Activated CD8-positive, alpha-beta memory T cell treated with anti-CD3 and anti-CD28 coated beads, Interleukin-2, amount 10 ng/mL, durations not matched to agents 7 days and 5 days (primary cell): ENCODE measurements at regions of chr3 and their contacts with region 1.

Region 1: GRCh38 chr3:186241910-186242821 is 119.9 kb downstream of the DGKG start:
- DNase-seq: peak; percentile 84
- ATAC-seq: peak; percentile 98
- H3K4me3 Mint-ChIP-seq: no peak overlapping the region
- H3K27ac Mint-ChIP-seq: no peak overlapping the region
- H3K4me1 Mint-ChIP-seq: peaks cover 10% of the 10 kb centered on the region
- H3K27me3 Mint-ChIP-seq: peaks cover 39% of the 10 kb centered on the region

Region 2: GRCh38 chr3:185983495-185984141 is 258.5 kb before region 1 on chr3:
- CTCF ChIA-PET with region 1: interaction called, 25 read pairs
- DNase-seq: peak; percentile 61
- ATAC-seq: peak; percentile 78
- H3K4me3 Mint-ChIP-seq: no peak overlapping the region
- H3K27ac Mint-ChIP-seq: no peak overlapping the region
- H3K4me1 Mint-ChIP-seq: peaks cover 3% of the 10 kb centered on the region
- H3K27me3 Mint-ChIP-seq: peaks cover 34% of the 10 kb centered on the region

Region 3: GRCh38 chr3:186138272-186138981 is 103.7 kb before region 1 on chr3:
- CTCF ChIA-PET with region 1: no interaction called
- DNase-seq: no peak
- ATAC-seq: no peak
- H3K4me3 Mint-ChIP-seq: no peak overlapping the region
- H3K27ac Mint-ChIP-seq: no peak overlapping the region
- H3K4me1 Mint-ChIP-seq: no peaks in the 10 kb centered on the region
- H3K27me3 Mint-ChIP-seq: peaks cover 38% of the 10 kb centered on the region

Region 4: GRCh38 chr3:186298876-186299275 is 56.7 kb after region 1 on chr3:
- CTCF ChIA-PET with region 1: no interaction called
- DNase-seq: no peak
- ATAC-seq: no peak
- H3K4me3 Mint-ChIP-seq: no peak overlapping the region
- H3K27ac Mint-ChIP-seq: no peak overlapping the region
- H3K4me1 Mint-ChIP-seq: no peaks in the 10 kb centered on the region
- H3K27me3 Mint-ChIP-seq: peaks cover 13% of the 10 kb centered on the region